ENCODE measurements at regions of chr1 and their contacts with region 1.

Region 1: GRCh38 chr1:119613769-119614720 is 34.0 kb downstream of the ZNF697 start:
- DNase-seq: peak; percentile 93
- H3K4me3 Mint-ChIP-seq: no peak overlapping the region
- H3K27ac Mint-ChIP-seq: no peak overlapping the region
- H3K4me1 Mint-ChIP-seq: peaks cover 5% of the 10 kb centered on the region
- H3K27me3 Mint-ChIP-seq: no peaks in the 10 kb centered on the region
- CTCF ChIP-seq: peak; percentile 90

Region 2: GRCh38 chr1:119582801-119583200 is 31.2 kb before region 1 on chr1:
- CTCF ChIA-PET with region 1: interaction called, 9 read pairs
- POLR2A ChIA-PET with region 1: no interaction called
- intact Hi-C with region 1: loop called (anchors 1 kb)
- DNase-seq: peak; percentile 75
- H3K4me3 Mint-ChIP-seq: no peak overlapping the region
- H3K27ac Mint-ChIP-seq: no peak overlapping the region
- H3K4me1 Mint-ChIP-seq: no peaks in the 10 kb centered on the region
- H3K27me3 Mint-ChIP-seq: no peaks in the 10 kb centered on the region
- CTCF ChIP-seq: peak; percentile 66

Region 3: DNA sequence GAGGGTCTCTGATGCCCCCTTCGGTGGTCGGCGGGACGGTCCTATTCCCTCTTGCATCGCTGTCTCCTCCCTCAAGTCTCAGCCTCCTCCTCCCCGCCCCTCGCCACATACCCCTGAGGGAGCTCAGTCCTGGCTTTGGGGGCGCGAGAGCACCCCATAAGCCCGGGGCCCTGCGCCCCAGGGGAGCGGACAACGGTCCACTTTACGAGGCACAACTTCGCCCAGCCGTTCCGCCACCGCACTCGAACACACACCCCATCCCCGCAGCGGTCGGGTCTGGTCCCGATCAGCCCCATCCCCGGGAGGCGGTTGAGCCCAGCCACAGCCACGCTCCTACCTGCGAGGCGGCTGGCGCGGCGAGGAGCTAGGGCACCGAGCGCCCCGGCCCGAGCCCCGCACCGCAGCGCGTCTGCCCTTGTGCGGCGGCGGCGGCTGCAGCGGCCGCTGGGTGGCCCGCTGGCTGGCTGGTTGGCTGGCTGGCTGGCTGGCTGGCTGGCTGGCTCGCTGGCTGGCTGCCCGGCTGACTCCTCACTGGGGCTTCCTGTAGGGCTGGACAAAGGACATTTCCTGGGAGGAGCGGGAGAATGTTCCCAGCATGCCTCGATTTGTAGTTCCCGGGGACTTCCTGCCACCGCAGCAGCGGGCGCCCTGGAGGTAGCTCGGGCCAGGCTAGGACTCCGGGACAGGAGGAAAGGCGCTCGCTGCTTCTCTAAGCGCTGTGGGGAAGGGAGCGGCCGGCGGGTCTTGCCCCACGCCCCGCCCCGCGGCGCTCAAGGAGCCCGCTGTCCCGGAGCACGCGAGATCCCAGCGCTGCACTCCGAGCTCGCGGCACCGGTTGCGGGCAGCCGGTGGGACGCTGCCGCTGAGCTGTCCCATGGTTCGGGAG is 33.9 kb after region 1 on chr1 and contains the start of gene ZNF697:
- CTCF ChIA-PET with region 1: interaction called, 15 read pairs
- POLR2A ChIA-PET with region 1: interaction called, 9 read pairs
- intact Hi-C with region 1: loop called (anchors 5 kb)
- DNase-seq: peak; percentile 97
- H3K4me3 Mint-ChIP-seq: peak within 1 kb of the TSS; percentile 84
- H3K27ac Mint-ChIP-seq: peak within 1 kb of the TSS; percentile 90
- H3K4me1 Mint-ChIP-seq: peaks cover 51% of the 10 kb centered on the region
- H3K27me3 Mint-ChIP-seq: peaks cover 14% of the 10 kb centered on the region
- CTCF ChIP-seq: no peak
- total RNA-seq, gene ZNF697: 12.2 and 13.2 TPM in 2 replicates

Region 4: DNA sequence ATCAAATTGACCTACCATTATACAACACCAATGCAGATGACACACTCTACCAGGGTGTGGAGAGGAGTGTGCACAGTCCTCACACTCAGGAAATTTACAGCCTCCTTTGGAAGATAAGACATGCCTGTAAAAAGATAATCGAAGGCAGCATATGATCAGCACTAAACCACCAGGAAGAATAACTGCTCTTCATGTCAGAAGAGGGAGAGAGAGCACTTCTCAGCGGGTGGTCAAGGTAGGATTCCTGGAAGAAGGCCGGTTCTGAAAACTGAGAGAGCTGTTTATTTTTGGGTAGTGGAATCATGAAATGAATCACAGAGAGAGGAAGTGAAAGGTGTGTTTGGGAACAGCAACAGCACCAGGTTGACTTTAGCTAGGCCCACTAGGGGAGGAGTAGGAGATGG is 48.0 kb after region 1 on chr1:
- CTCF ChIA-PET with region 1: interaction called, 99 read pairs
- POLR2A ChIA-PET with region 1: interaction called, 3 read pairs
- intact Hi-C with region 1: loop called (anchors 1 kb)
- DNase-seq: no peak
- H3K4me3 Mint-ChIP-seq: no peak overlapping the region
- H3K27ac Mint-ChIP-seq: no peak overlapping the region
- H3K4me1 Mint-ChIP-seq: peaks cover 6% of the 10 kb centered on the region
- H3K27me3 Mint-ChIP-seq: peaks cover 11% of the 10 kb centered on the region
- CTCF ChIP-seq: no peak

Region 5: DNA sequence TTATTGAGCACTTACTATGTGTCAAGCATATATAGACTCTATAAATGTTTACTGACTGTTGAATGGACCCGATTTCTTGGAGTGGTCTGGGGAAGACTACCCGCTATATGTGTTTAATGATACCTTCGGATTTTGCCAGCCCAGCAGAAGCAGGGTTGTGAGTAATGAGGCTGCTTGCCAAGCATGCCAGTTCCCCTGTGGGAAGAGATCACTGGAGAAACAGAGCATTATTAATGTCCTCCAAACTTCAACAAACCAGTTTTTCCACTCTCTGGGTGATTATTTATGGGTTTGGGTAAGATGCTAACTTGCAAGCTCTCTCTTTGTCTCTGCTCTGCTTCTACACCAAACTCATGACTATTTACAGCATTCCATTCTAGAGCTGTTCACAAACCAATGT is 72.6 kb after region 1 on chr1:
- CTCF ChIA-PET with region 1: interaction called, 16 read pairs
- POLR2A ChIA-PET with region 1: interaction called, 5 read pairs
- intact Hi-C with region 1: no loop called
- DNase-seq: peak; percentile 59
- H3K4me3 Mint-ChIP-seq: no peak overlapping the region
- H3K27ac Mint-ChIP-seq: no peak overlapping the region
- H3K4me1 Mint-ChIP-seq: peaks cover 19% of the 10 kb centered on the region
- H3K27me3 Mint-ChIP-seq: no peaks in the 10 kb centered on the region
- CTCF ChIP-seq: no peak

Measured in MCF 10A (cell line).